Activated CD4-positive, alpha-beta memory T cell treated with anti-CD3 and anti-CD28 coated beads, Interleukin-2, amount 10 ng/mL, durations not matched to agents 7 days and 5 days (primary cell): ENCODE measurements at regions of chr1 and their contacts with region 1.

Region 1: DNA sequence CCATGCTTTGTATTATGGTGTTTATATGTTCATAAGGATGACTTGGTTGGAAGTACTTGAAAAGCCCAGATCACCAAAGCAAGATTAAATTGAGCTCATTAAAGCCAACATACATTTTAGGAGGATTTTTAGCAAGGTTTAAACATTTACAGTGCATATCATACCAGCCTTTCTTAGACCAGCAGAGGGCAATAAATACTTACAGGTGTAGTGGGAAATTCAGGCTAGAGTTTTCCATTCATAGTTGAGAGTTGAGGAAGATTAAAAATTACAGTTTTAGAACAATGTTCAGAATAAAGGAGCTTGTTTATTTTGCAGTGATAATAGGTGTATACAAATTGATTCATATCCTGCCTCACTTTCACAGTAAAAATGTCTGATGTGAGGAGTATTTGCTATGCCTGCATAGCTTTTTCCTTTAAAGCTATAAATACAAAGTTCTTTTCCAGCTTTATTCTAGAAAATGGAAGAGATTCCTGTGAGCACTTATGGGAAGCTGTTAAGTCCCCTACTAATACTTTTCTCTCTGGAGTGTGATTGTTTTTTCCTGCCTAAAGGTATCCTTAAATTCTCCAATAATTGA is 35.3 kb downstream of the DTL start:
- DNase-seq: no peak
- H3K4me3 Mint-ChIP-seq: no peak overlapping the region
- H3K27ac Mint-ChIP-seq: no peak overlapping the region
- H3K4me1 Mint-ChIP-seq: no peaks in the 10 kb centered on the region
- H3K27me3 Mint-ChIP-seq: no peaks in the 10 kb centered on the region

Region 2: GRCh38 chr1:212089560-212090163 is 18.9 kb after region 1 on chr1:
- CTCF ChIA-PET with region 1: interaction called, 12 read pairs
- POLR2A ChIA-PET with region 1: no interaction called
- DNase-seq: no peak
- H3K4me3 Mint-ChIP-seq: no peak overlapping the region
- H3K27ac Mint-ChIP-seq: no peak overlapping the region
- H3K4me1 Mint-ChIP-seq: peaks cover 15% of the 10 kb centered on the region
- H3K27me3 Mint-ChIP-seq: no peaks in the 10 kb centered on the region

Region 3: DNA sequence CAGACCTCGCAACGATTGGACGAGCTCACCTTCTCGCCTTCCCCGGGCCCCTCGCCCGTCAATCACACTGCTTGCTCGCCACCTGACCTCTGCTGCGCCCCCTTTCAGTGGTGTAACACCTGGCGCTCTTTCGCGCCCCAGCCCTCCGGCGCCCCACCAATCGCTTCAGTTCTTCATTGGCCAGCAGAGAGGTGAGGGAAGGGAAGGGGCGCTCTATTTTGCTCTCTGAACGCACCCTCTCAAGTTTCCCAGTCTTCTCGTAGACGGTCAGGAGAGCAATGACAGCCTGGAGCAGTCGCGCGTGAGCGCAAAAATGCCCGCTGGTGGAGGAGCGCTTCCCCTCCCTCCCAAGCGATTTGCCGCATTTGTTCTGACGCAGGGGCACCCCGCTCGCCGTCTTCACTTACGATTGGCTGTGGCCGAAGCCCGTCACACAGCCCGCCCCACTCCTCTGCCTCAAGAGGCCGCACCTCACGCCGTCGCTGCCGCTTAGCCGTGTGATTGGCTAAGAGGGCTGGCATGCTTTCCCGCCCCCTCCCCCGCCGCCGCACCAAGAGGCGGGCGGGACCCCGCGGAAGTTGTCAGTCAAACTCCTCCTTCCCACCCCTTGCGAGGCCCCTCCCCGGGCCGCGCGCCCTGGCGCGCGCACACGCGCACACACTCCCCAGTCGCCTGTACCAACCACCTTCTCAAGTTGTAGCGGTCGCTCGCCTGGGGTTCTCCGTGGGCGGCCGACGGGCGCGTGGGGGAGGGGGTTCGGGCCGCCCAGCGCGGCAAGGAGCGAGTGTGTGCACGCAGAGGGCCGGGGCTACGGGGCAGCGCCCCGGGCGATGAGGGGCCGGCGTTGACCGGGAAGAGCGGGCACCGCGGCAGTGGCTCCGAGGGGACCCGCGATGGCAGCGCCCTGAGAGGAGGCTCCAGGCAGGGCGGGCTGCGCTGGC is 214.2 kb after region 1 on chr1 and contains the start of gene PPP2R5A:
- CTCF ChIA-PET with region 1: interaction called, 49 read pairs
- POLR2A ChIA-PET with region 1: interaction called, 19 read pairs
- DNase-seq: peak; percentile 99
- H3K4me3 Mint-ChIP-seq: peak within 1 kb of the TSS; percentile 94
- H3K27ac Mint-ChIP-seq: peak within 1 kb of the TSS; percentile 98
- H3K4me1 Mint-ChIP-seq: peaks cover 40% of the 10 kb centered on the region
- H3K27me3 Mint-ChIP-seq: peaks cover 6% of the 10 kb centered on the region
- total RNA-seq, gene PPP2R5A: 65.9 to 67.0 TPM

Region 4: GRCh38 chr1:212291505-212292134 is 220.8 kb after region 1 on chr1:
- CTCF ChIA-PET with region 1: interaction called, 57 read pairs
- POLR2A ChIA-PET with region 1: interaction called, 19 read pairs
- DNase-seq: no peak
- H3K4me3 Mint-ChIP-seq: peak overlapping the region; percentile 3
- H3K27ac Mint-ChIP-seq: no peak overlapping the region
- H3K4me1 Mint-ChIP-seq: peaks cover 70% of the 10 kb centered on the region
- H3K27me3 Mint-ChIP-seq: no peaks in the 10 kb centered on the region

Region 5: GRCh38 chr1:212311846-212312497 is 241.2 kb after region 1 on chr1:
- CTCF ChIA-PET with region 1: interaction called, 12 read pairs
- POLR2A ChIA-PET with region 1: interaction called, 3 read pairs
- DNase-seq: no peak
- H3K4me3 Mint-ChIP-seq: no peak overlapping the region
- H3K27ac Mint-ChIP-seq: no peak overlapping the region
- H3K4me1 Mint-ChIP-seq: peaks cover 13% of the 10 kb centered on the region
- H3K27me3 Mint-ChIP-seq: no peaks in the 10 kb centered on the region

Region 6: DNA sequence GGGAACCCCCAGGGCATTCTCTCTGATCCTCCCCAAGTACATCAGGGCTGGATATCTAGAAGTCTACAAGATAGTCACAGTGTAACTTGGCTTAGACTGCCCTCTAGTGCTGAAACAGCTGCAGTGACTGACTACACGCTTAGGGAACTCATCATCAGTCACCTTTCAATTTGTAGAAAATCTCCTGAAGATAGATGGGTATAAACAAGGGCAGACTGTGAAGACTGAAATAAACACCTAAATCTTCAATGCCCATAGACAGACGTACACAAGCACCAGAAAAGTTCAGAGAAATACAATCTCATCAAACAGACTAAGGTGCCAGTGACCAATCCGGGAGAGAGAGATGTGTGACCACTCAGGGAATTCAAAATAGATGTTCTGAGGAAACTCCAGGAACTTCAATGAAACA is 297.3 kb after region 1 on chr1:
- CTCF ChIA-PET with region 1: interaction called, 70 read pairs
- POLR2A ChIA-PET with region 1: interaction called, 3 read pairs
- DNase-seq: peak; percentile 65
- H3K4me3 Mint-ChIP-seq: no peak overlapping the region
- H3K27ac Mint-ChIP-seq: no peak overlapping the region
- H3K4me1 Mint-ChIP-seq: peaks cover 2% of the 10 kb centered on the region
- H3K27me3 Mint-ChIP-seq: no peaks in the 10 kb centered on the region